Endothelial cell of umbilical vein (primary cell): ENCODE measurements at regions of chr15 and their contacts with region 1.

Region 1: GRCh38 chr15:52139599-52140491 is 27.3 kb upstream of the BCL2L10 start:
- DNase-seq: peak; percentile 81
- H3K4me3 ChIP-seq: no peak overlapping the region
- H3K27ac ChIP-seq: no peak overlapping the region
- H3K4me1 ChIP-seq: peaks cover 6% of the 10 kb centered on the region
- H3K27me3 ChIP-seq: no peaks in the 10 kb centered on the region
- CTCF ChIP-seq: peak; percentile 80 to 85
- POLR2A ChIP-seq: no peak

Region 2: DNA sequence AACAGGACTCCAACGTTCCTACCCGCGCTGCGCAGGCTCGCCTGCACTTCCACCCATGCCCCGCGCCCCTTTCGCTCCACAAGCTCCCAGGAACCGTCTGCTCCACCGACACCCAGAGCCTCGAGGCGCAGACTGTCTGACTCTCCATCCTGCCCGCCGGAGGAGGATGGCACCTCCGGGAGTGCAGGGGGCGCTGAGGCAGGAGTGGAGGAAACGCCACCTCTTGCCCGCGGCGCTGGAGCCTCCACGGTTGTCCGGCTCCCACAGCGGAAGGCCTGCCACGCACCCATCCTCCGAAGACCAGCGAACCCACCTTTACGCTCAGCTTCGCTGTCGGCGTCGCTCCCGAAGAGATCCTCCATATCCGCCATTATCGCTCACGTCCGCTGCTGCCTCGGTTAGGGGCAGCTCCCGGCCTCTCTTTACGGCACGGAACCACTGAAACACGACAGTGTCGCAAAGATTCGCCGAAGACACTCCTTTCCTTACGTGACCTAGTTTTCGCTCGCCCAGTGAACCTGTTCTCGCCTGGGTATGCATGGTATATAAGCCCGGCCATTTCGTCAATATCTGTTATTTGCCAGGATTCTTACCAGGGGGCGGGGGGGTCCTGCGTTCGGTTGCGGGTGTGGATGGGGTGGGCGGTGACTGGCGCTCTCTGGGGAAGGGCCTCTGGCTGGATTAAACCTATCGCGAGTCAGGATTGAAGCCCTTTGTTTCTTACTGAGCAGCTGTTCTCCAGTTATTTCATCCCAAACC is 168.3 kb before region 1 on chr15 and contains the start of gene LEO1:
- CTCF ChIA-PET with region 1: interaction called, 13 read pairs
- POLR2A ChIA-PET with region 1: no interaction called
- dilution Hi-C with region 1: no loop called
- intact Hi-C with region 1: no loop called
- DNase-seq: peak; percentile 97
- H3K4me3 ChIP-seq: peak within 1 kb of the TSS; percentile 54 to 81 (median 61)
- H3K27ac ChIP-seq: peak within 1 kb of the TSS; percentile 68
- H3K4me1 ChIP-seq: peaks cover 12% of the 10 kb centered on the region
- H3K27me3 ChIP-seq: no peaks in the 10 kb centered on the region
- CTCF ChIP-seq: peak in 1 of 2 donors; percentile 42
- POLR2A ChIP-seq: peak; percentile 92
- total RNA-seq, gene LEO1: 22.6 and 28.0 TPM in 2 replicates

Region 3: DNA sequence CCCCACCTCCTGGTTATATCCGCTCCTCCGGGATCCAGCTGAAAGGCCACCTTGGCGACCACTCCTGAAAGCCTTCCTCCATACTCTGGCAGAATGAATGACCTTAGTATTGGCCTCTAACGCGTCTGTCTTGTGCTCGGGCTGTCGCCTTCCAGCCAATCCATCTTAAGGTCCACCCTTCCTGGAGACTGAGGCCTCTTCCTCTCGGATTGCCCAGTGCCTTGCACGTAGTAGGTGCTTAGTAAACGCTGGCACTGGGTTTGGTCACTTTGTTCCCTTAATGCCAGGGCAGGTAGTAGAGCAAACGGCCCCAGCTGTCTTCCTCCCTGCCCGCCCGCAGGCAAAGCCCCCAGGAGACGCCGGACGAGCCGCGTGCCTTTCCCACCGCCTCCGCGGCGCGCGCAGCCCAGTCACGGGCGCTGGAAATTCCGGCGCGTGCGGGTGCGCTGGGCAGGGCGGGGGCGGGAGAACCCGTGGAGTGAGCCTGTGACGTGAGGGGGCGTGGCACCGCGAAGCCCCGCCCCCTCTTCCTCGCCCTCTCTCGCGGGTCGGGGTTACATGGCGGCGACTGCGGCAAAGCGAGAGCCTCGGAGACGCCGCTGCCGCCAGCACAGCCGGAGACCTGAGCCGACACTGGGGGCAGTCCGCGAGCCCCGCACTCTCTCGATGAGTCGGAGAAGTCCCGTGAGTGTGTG is 121.0 kb before region 1 on chr15 and contains the start of gene MAPK6:
- CTCF ChIA-PET with region 1: interaction called, 4 read pairs
- POLR2A ChIA-PET with region 1: no interaction called
- dilution Hi-C with region 1: no loop called
- intact Hi-C with region 1: loop called (anchors 2 kb)
- DNase-seq: peak; percentile 93
- H3K4me3 ChIP-seq: peak within 1 kb of the TSS; percentile 73 to 99 (median 90)
- H3K27ac ChIP-seq: peak within 1 kb of the TSS; percentile 96
- H3K4me1 ChIP-seq: peaks cover 25% of the 10 kb centered on the region
- H3K27me3 ChIP-seq: no peaks in the 10 kb centered on the region
- CTCF ChIP-seq: no peak
- POLR2A ChIP-seq: peak; percentile 75
- total RNA-seq, gene MAPK6: 35.7 and 37.4 TPM in 2 replicates

Region 4: GRCh38 chr15:52093539-52094502 is 46.0 kb before region 1 on chr15:
- CTCF ChIA-PET with region 1: interaction called, 3 read pairs
- POLR2A ChIA-PET with region 1: no interaction called
- dilution Hi-C with region 1: no loop called
- intact Hi-C with region 1: loop called (anchors 1 kb)
- DNase-seq: peak; percentile 99
- H3K4me3 ChIP-seq: peak overlapping the region in 1 of 3 experiments; percentile 14
- H3K27ac ChIP-seq: peak overlapping the region; percentile 99
- H3K4me1 ChIP-seq: peaks cover 34% of the 10 kb centered on the region
- H3K27me3 ChIP-seq: no peaks in the 10 kb centered on the region
- CTCF ChIP-seq: no peak
- POLR2A ChIP-seq: peak; percentile 69

Region 5: GRCh38 chr15:52112203-52112750 is 27.6 kb before region 1 on chr15:
- CTCF ChIA-PET with region 1: interaction called, 10 read pairs
- POLR2A ChIA-PET with region 1: no interaction called
- dilution Hi-C with region 1: no loop called
- intact Hi-C with region 1: no loop called
- DNase-seq: peak; percentile 48
- H3K4me3 ChIP-seq: peak overlapping the region; percentile 3 to 38 (median 35)
- H3K27ac ChIP-seq: no peak overlapping the region
- H3K4me1 ChIP-seq: peaks cover 21% of the 10 kb centered on the region
- H3K27me3 ChIP-seq: no peaks in the 10 kb centered on the region
- CTCF ChIP-seq: peak in 1 of 2 donors; percentile 2
- POLR2A ChIP-seq: no peak

Region 6: DNA sequence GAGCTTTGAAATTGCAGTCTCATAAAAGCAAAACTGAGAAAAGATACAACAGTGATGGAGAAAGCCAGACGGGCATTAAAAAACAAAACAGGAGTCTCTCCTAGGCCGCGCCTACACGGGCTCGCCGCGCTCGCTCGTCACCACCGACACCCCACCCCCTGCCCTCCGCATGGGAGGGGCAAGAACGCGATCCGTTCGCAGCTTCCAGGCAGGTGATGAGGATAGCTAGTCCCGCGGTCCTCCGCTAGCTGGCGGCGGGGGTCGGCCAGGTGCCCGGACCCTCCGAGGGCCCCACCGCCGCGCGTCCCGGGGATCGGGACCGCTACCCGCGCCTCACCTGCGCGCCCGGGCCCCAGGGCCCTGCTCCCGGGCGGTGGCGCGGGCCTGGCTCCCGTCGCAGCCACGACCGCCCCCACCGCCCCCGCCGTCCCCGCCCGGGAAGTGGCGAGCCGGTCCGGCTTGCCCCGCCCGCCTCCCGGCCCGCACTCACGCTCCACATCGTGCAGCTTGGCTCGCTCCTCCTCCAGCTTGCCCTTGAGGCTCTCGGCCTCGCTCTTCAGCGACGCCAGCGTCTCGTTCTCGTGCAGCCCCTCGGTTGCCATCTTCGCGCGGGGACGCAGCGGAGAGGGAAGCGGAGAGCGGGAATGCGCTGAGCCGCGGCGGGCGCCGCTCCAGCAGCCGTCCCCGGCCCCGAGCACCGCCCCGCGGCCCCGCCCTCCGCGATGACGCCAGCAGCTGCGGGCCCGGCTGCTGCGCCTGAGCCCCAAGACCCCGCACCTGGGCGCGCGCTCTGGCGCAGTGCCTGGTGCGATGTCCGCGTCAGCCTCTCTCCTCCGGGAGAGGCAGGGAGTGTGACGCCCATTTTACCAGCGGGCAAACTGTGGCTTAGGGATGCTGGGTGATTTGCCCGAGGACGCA is 39.7 kb after region 1 on chr15:
- CTCF ChIA-PET with region 1: interaction called, 16 read pairs
- POLR2A ChIA-PET with region 1: no interaction called
- dilution Hi-C with region 1: no loop called
- intact Hi-C with region 1: no loop called
- DNase-seq: peak; percentile 82
- H3K4me3 ChIP-seq: peak overlapping the region; percentile 18 to 85 (median 70)
- H3K27ac ChIP-seq: peak overlapping the region; percentile 58
- H3K4me1 ChIP-seq: peaks cover 9% of the 10 kb centered on the region
- H3K27me3 ChIP-seq: no peaks in the 10 kb centered on the region
- CTCF ChIP-seq: no peak
- POLR2A ChIP-seq: peak; percentile 59